OCI-LY7 (cell line): ENCODE measurements at regions of chr2 and their contacts with region 1.

Region 1: DNA sequence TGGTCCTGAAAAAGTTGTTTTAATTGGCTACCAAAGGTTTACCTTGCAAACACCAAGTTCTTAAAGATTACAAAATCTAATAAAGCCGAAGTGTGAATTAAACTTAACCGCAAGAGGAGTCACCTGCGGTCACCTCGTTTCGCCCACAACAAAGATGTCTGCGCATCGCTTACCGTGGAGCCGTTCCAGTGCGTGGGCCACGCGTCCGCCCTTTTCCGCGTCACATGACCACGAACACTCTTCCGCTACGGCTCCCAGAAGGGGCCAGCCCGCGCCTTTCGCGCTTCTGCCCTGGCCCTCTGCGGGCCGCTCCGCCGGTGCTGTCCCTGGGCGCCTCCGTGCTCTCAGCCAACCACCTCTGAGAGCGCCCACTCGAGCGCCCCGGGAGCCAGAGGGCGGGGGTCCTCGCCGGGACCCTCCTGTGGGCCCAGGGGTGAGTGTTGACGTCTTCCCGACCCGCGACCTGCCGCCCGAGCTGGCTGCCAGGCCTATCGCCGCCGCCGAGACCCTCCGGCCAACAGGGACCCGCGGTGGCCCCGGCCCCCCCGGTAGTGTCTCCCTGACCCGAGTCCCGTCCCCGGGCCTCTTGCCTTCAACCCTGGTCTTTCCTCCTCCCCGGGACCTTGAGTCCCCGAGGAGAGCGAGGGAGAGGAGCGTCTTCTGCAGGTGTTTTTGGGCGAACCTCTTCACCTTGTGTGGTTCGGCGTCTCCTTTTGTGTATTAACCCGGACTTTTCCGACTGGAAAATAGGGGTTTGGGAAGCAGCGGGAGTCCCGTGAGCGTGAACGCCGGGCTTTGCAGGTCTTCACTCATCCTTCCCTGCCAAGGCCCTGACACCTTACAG is at the start of gene MFF:
- DNase-seq: peak; percentile 95
- H3K4me3 ChIP-seq: peak within 1 kb of the TSS; percentile 90
- H3K27ac ChIP-seq: peak within 1 kb of the TSS; percentile 38
- H3K4me1 ChIP-seq: peaks cover 23% of the 10 kb centered on the region
- CTCF ChIP-seq: peak; percentile 68
- total RNA-seq, gene MFF: 64.4 and 66.6 TPM in 2 replicates

Region 2: DNA sequence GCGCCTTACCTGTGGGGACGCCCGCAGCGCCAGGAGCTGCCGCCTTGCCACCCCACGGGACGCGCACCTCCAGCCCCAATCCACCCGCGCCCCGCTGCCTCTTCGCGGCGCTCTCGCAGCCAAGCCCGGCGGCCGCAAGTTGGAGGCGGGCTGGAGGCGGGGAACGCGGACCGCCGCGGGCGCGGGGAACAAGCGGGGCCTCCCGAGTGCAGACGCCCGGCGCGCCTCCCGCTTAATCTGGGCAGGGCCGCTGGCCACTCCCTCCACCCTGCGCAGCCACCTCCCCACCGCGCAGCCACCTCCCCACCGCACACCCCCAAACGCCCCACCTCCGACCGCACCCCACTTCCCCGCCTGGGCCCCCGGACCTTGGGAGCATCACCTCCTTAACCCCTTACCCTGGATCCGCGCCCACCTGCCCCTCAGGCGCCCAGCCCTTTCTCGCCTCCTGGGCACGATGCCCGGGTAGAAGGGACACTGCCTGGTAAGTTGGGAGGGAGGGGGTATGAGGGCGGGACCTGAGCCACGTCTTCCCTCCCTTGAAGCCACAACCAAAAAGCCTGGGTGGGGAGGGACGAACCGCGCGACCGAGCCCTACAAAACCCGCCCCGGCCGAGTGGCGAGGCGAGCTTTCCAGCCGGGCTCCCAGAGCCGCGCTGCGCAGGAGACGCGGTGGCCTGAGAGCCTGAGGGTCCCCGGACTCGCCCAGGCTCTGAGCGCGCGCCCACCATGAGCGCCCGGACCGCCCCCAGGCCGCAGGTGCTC is 161.0 kb before region 1 on chr2 and contains the starts of genes COL4A3 and COL4A4:
- CTCF ChIA-PET with region 1: no interaction called
- POLR2A ChIA-PET with region 1: no interaction called
- intact Hi-C with region 1: loop called (anchors 10 kb)
- DNase-seq: no peak
- H3K4me3 ChIP-seq: peak within 1 kb of the TSS; percentile 64
- H3K27ac ChIP-seq: no peak within 1 kb of the TSS
- H3K4me1 ChIP-seq: peaks cover 11% of the 10 kb centered on the region
- CTCF ChIP-seq: no peak
- total RNA-seq, gene COL4A3: 0.05 and 0.06 TPM in 2 replicates
- total RNA-seq, gene COL4A4: 0.10 and 0.16 TPM in 2 replicates

Region 3: GRCh38 chr2:227339098-227339599 is 13.9 kb after region 1 on chr2:
- CTCF ChIA-PET with region 1: no interaction called
- POLR2A ChIA-PET with region 1: interaction called, 12 read pairs
- intact Hi-C with region 1: no loop called
- DNase-seq: no peak
- H3K4me3 ChIP-seq: no peak overlapping the region
- H3K27ac ChIP-seq: no peak overlapping the region
- H3K4me1 ChIP-seq: no peaks in the 10 kb centered on the region
- CTCF ChIP-seq: no peak